Motor neuron (in vitro differentiated cells): ENCODE measurements at regions of chr6 and their contacts with region 1.

Region 1: GRCh38 chr6:43506667-43507471 is 3.3 kb downstream of the LRRC73 start:
- ATAC-seq: peak; percentile 27 to 49 (median 35)
- H3K4me3 ChIP-seq: peak overlapping the region in 1 of 5 donors; percentile 5
- H3K27ac ChIP-seq: no peak overlapping the region
- H3K4me1 ChIP-seq: peaks cover 15 to 17% of the 10 kb centered on the region in 2 donors

Region 2: DNA sequence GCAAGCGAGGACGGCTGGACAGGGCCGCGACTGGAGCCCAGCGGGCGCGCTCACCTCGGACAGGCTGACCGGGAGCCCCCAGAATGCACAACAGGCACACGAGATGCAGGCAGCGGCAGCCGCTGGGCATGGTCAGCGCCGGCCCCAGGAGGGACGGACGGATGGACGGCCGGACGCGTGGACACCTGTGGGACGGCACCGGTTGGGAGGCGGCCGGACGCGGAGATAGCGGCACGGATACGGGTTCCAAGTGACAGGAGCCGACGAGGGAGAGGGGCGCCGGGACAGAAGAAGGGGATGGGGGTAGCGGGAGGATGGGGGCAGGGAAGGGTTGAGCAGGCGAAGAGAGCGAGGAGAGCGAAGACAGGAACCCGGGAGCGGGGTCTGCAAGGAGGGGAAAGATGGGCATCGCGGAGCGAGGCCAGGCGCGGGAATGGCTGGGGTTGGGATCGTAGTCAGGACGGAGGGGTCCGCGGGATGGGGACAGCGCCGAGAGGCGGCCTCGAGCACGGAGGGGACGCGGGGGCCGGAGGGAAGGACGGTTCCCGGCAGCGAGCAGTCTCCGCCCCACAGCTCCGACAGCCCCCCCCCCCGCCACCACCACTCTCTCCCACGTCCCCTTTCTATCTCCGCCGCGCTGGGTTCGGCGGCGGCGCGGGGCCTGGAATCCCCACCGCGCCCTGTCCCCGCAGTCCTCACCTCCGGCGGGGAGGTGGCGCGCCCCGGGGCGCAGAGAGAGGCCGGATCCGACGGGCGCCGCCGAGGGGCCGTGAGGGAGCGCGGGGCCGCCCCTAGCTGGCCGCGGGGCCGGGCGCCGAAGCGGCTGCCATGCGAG is 52.0 kb before region 1 on chr6:
- in situ Hi-C with region 1: loop called in 1 of 9 experiments (anchors 10 kb)
- ATAC-seq: peak; percentile 73 to 85 (median 78)
- H3K4me3 ChIP-seq: peak overlapping the region; percentile 44 to 91 (median 56)
- H3K27ac ChIP-seq: peak overlapping the region; percentile 7 to 15
- H3K4me1 ChIP-seq: peaks cover 0 to 6% of the 10 kb centered on the region in 2 donors